ENCODE measurements at regions of chr1 and their contacts with region 1.

Region 1: GRCh38 chr1:247331172-247331991 is at the start of gene ZNF496:
- DNase-seq: peak; percentile 80
- H3K4me3 Mint-ChIP-seq: peak within 1 kb of the TSS; percentile 86
- H3K27ac Mint-ChIP-seq: peak within 1 kb of the TSS; percentile 75
- H3K4me1 Mint-ChIP-seq: peaks cover 30% of the 10 kb centered on the region
- H3K27me3 Mint-ChIP-seq: no peaks in the 10 kb centered on the region
- total RNA-seq, gene ZNF496: 9.8 to 10.6 TPM

Region 2: GRCh38 chr1:247054992-247055415 is 276.4 kb before region 1 on chr1:
- CTCF ChIA-PET with region 1: no interaction called
- intact Hi-C with region 1: no loop called
- DNase-seq: no peak
- H3K4me3 Mint-ChIP-seq: no peak overlapping the region
- H3K27ac Mint-ChIP-seq: no peak overlapping the region
- H3K4me1 Mint-ChIP-seq: peaks cover 6% of the 10 kb centered on the region
- H3K27me3 Mint-ChIP-seq: no peaks in the 10 kb centered on the region

Region 3: GRCh38 chr1:247103859-247104591 is 227.4 kb before region 1 on chr1 and contains the start of gene ZNF669:
- CTCF ChIA-PET with region 1: no interaction called
- intact Hi-C with region 1: loop called (anchors 1 kb)
- DNase-seq: peak; percentile 97
- H3K4me3 Mint-ChIP-seq: peak within 1 kb of the TSS; percentile 88
- H3K27ac Mint-ChIP-seq: peak within 1 kb of the TSS; percentile 90
- H3K4me1 Mint-ChIP-seq: peaks cover 17% of the 10 kb centered on the region
- H3K27me3 Mint-ChIP-seq: peaks cover 12% of the 10 kb centered on the region
- total RNA-seq, gene ZNF669: 8.2 to 8.4 TPM

Region 4: DNA sequence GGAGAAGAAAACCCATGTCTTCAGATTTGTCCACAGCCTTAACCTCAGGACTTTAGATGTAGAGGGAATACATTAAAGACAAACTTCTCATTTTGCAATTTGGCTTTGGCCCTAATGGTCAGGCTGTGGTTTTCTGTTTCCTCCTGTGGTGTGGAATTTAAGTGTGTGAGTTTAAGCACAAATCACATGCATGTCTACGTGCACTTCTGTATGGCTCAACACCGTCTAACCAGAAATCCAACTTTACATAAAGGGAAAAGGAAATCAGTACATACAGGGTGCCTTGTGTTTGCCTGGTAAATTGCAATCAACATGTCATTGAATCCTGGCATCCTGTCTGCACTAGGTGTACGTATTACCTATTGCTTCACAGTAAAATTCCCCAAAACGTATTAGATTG is 158.4 kb before region 1 on chr1:
- CTCF ChIA-PET with region 1: no interaction called
- intact Hi-C with region 1: loop called (anchors 5 kb)
- DNase-seq: no peak
- H3K4me3 Mint-ChIP-seq: no peak overlapping the region
- H3K27ac Mint-ChIP-seq: no peak overlapping the region
- H3K4me1 Mint-ChIP-seq: peaks cover 18% of the 10 kb centered on the region
- H3K27me3 Mint-ChIP-seq: no peaks in the 10 kb centered on the region

Measured in activated naive CD4-positive, alpha-beta T cell treated with anti-CD3 and anti-CD28 coated beads for 36 hours (primary cell).